Prostate gland (tissue), 2 donors: ENCODE measurements at regions of chr12 and their contacts with region 1.

Region 1: DNA sequence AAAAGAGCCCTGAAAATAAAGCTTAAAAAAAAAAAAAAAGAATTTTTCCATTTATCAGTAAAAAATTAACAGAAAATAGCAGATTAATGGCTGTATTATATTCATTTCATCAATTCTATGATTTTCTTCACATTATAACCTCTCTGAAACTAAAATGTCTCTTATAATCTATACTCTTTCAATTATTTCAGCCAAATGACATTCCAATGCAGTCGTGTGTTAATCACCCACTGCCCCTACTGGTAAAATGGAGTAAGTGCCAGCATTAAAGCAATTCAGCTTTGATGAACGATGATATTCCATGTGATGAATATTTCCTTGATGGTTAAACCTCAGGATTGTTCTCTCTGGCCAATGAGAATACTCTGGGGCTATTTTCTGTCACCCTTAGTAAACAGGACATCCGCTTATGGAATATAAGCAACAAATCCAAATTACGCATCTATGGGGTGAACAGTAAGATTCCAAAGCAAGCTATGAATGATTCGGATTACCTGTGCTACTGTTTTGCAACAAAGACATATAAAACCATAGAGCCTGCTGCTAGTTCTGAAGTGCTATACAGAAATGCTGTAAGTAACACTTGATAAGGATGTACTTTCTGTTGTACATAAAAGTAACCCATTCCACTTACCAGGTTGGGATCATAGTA is 20.3 kb upstream of the SYCP3 start:
- DNase-seq: no peak
- H3K4me3 ChIP-seq: no peak overlapping the region
- H3K27ac ChIP-seq: no peak overlapping the region
- H3K4me1 ChIP-seq: no peaks in the 10 kb centered on the region
- H3K27me3 ChIP-seq: no peaks in the 10 kb centered on the region
- CTCF ChIP-seq: peak; percentile 13 to 76 (median 60)
- POLR2A ChIP-seq: no peak

Region 2: GRCh38 chr12:101490286-101490920 is 269.1 kb before region 1 on chr12:
- intact Hi-C with region 1: loop called (anchors 10 kb)
- DNase-seq: peak; percentile 36
- H3K4me3 ChIP-seq: no peak overlapping the region
- H3K27ac ChIP-seq: no peak overlapping the region
- H3K4me1 ChIP-seq: no peaks in the 10 kb centered on the region
- H3K27me3 ChIP-seq: no peaks in the 10 kb centered on the region
- CTCF ChIP-seq: peak; percentile 11 to 61 (median 44)
- POLR2A ChIP-seq: no peak

Region 3: DNA sequence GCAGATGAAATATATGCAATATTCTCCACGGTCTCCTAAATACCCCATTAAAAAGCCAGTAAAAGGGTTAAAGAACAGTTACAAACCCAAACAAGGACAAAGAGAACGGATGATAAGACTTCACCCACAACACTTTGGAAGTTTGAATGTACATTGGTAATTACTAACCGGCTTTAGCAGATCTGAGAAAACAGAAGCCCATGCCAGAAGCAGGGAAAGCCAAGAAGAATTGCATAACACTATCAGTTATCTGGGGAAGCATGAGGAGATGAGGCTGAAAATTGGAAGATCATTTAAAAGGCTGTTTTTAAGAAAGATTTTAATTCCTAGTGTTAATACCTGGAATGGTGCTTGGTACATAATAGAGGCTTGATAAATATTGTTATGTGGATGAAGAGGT is 220.4 kb before region 1 on chr12:
- intact Hi-C with region 1: no loop called
- DNase-seq: no peak
- H3K4me3 ChIP-seq: no peak overlapping the region
- H3K27ac ChIP-seq: no peak overlapping the region
- H3K4me1 ChIP-seq: no peaks in the 10 kb centered on the region
- H3K27me3 ChIP-seq: no peaks in the 10 kb centered on the region
- CTCF ChIP-seq: no peak
- POLR2A ChIP-seq: no peak

Region 4: GRCh38 chr12:101564912-101565311 is 194.6 kb before region 1 on chr12:
- intact Hi-C with region 1: loop called (anchors 5 kb)
- DNase-seq: no peak
- H3K4me3 ChIP-seq: no peak overlapping the region
- H3K27ac ChIP-seq: no peak overlapping the region
- H3K4me1 ChIP-seq: no peaks in the 10 kb centered on the region
- H3K27me3 ChIP-seq: no peaks in the 10 kb centered on the region
- CTCF ChIP-seq: no peak
- POLR2A ChIP-seq: no peak